HEK293 (cell line): ENCODE measurements at regions of chr11 and their contacts with region 1.

Region 1: GRCh38 chr11:86637988-86638387 is 34.4 kb downstream of the ME3 start:
- H3K4me3 ChIP-seq: no peak overlapping the region
- H3K27ac ChIP-seq: no peak overlapping the region
- H3K4me1 ChIP-seq: no peaks in the 10 kb centered on the region
- CTCF ChIP-seq: no peak

Region 2: DNA sequence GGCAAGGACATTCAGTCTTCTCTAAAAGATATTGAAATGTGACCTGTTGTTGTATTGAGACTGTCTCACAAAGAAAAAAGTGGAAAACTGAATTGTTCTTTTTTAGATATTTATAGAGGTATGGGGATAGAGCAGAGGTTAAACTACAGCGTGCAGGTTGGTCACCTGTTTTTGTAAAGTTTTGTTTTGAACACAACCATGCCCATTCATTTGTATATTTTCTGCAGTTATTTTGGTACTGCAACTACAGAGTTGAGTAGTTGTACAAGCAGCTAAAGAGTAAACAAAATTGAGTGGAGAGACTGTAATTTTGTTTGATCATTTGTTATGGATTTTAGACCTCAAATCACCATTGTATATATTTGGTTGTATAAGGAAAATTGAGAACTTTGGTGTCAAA is 382.1 kb before region 1 on chr11:
- CTCF ChIA-PET with region 1: no interaction called
- POLR2A ChIA-PET with region 1: no interaction called
- H3K4me3 ChIP-seq: no peak overlapping the region
- H3K27ac ChIP-seq: no peak overlapping the region
- H3K4me1 ChIP-seq: no peaks in the 10 kb centered on the region
- CTCF ChIP-seq: no peak

Region 3: GRCh38 chr11:86346513-86346912 is 291.5 kb before region 1 on chr11:
- CTCF ChIA-PET with region 1: interaction called, 10 read pairs
- POLR2A ChIA-PET with region 1: no interaction called
- H3K4me3 ChIP-seq: no peak overlapping the region
- H3K27ac ChIP-seq: no peak overlapping the region
- H3K4me1 ChIP-seq: no peaks in the 10 kb centered on the region
- CTCF ChIP-seq: no peak

Region 4: GRCh38 chr11:86370922-86371594 is 266.9 kb before region 1 on chr11:
- CTCF ChIA-PET with region 1: no interaction called
- POLR2A ChIA-PET with region 1: no interaction called
- H3K4me3 ChIP-seq: no peak overlapping the region
- H3K27ac ChIP-seq: no peak overlapping the region
- H3K4me1 ChIP-seq: no peaks in the 10 kb centered on the region
- CTCF ChIP-seq: no peak

Region 5: GRCh38 chr11:86620891-86621521 is 17.0 kb before region 1 on chr11:
- CTCF ChIA-PET with region 1: interaction called, 10 read pairs
- POLR2A ChIA-PET with region 1: no interaction called
- H3K4me3 ChIP-seq: no peak overlapping the region
- H3K27ac ChIP-seq: no peak overlapping the region
- H3K4me1 ChIP-seq: no peaks in the 10 kb centered on the region
- CTCF ChIP-seq: no peak